Upper lobe of right lung (tissue), 1 donor: ENCODE measurements at regions of chr4 and their contacts with region 1.

Region 1: GRCh38 chr4:77385124-77385969 is 220.3 kb upstream of the CXCL13 start:
- DNase-seq: no peak
- ATAC-seq: peak; percentile 89
- H3K4me3 ChIP-seq: no peak overlapping the region
- H3K27ac ChIP-seq: no peak overlapping the region
- H3K4me1 ChIP-seq: no peaks in the 10 kb centered on the region
- H3K27me3 ChIP-seq: no peaks in the 10 kb centered on the region
- CTCF ChIP-seq: peak; percentile 80

Region 2: DNA sequence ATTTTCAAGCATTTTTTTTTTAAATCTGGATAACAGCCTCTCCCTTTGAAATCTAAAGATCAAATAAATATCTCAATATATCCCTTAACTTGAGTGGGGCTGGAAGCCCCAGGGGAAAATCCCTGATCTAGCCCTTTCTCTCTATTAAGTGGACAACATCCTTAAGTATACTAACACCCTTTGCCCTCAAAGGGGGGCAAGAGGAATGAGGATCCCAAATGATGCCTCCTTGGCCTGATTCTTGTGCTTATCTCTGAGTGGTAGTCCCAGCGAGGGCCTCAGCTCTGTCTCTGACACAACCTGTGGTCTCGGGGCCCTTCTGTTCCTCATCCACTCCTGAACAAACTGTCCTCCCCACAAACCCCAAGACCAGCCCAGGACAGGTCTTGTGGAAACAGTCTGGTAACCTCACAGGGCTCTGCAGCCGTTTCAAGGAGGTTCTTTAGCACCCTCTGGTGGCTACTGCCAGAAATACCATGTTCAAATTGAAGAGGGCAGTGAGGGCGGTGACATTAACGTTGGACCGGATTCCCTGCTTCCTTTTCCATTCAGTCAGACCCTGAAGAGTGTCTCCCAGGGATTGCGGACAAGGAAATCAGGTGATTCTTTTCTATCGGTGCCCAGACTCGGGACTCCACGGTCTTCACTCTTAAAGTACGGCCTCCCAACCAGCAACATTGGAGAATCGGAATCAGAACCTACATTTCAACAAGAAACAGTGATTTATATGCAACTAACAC is 233.2 kb after region 1 on chr4:
- intact Hi-C with region 1: loop called (anchors 10 kb)
- DNase-seq: no peak
- ATAC-seq: peak; percentile 99
- H3K4me3 ChIP-seq: no peak overlapping the region
- H3K27ac ChIP-seq: no peak overlapping the region
- H3K4me1 ChIP-seq: no peaks in the 10 kb centered on the region
- H3K27me3 ChIP-seq: no peaks in the 10 kb centered on the region
- CTCF ChIP-seq: peak; percentile 80